Heart left ventricle (tissue), 16 donors: ENCODE measurements at regions of chr17 and their contacts with region 1.

Region 1: DNA sequence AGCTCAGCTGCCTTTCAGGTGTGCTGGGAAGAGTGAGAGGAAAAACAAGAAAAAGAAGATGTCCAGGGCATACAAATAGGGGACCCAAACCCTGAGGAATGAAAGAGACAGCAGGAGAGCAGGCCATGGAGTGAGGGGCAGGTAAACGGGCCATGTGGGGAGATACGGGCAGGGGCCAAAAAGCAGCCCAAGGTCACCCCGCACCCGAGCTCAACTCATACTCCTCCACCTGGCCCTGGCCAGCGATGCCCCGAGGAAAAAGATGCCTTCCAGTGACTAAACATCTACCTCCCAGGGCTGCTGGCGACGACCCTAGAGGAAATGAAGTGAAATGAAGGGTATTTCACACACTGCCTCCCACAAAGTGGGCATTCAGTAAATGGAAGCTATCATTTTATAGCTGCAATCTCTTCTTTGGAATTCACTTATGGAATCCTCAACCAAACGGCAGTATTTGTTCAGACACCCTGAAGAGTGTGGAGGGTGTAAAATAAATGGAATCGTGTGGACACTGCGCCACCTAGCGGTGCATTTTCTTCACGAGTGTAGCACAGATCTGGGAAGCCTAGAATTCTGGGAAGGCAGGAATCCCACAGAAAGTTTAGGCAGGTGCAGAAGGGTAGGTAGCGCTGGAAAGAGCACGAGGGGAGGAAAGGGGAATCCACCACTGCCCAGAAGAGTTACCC is 14.9 kb downstream of the ELAC2 start:
- DNase-seq: peak; percentile 67 to 85 (median 79)
- ATAC-seq: peak; percentile 81 to 93 (median 85)
- H3K4me3 ChIP-seq: no peak overlapping the region
- H3K27ac ChIP-seq: no peak overlapping the region
- H3K4me1 ChIP-seq: peaks cover 0 to 7% (median 1%) of the 10 kb centered on the region in 12 donors
- H3K27me3 ChIP-seq: no peaks in the 10 kb centered on the region
- CTCF ChIP-seq: peak; percentile 72 to 91 (median 85)
- POLR2A ChIP-seq: no peak

Region 2: DNA sequence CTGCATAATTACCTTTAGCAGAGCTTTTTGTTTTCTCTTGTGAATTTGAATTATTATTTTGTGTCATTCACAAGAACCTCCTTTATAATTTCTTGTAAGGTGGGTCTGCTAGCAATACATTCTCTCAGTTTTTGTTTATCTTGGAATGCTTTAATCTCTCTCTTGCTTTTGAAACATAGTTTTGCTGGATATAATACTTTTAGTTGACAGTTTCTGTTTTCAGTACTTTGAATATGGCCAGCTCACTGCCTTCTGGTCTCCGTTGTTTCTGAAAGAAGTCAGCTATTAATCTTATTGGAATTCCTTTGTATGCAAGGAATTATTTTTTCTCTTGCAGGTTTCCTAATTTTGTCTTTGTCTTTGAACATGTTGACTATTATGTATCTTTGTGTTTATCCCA is 815.3 kb before region 1 on chr17:
- intact Hi-C with region 1: loop called in 6 of 10 experiments (anchors 5 to 10 kb)
- DNase-seq: no peak
- ATAC-seq: no peak
- H3K4me3 ChIP-seq: no peak overlapping the region
- H3K27ac ChIP-seq: no peak overlapping the region
- H3K4me1 ChIP-seq: no peaks in the 10 kb centered on the region
- H3K27me3 ChIP-seq: no peaks in the 10 kb centered on the region
- CTCF ChIP-seq: no peak
- POLR2A ChIP-seq: no peak

Region 3: DNA sequence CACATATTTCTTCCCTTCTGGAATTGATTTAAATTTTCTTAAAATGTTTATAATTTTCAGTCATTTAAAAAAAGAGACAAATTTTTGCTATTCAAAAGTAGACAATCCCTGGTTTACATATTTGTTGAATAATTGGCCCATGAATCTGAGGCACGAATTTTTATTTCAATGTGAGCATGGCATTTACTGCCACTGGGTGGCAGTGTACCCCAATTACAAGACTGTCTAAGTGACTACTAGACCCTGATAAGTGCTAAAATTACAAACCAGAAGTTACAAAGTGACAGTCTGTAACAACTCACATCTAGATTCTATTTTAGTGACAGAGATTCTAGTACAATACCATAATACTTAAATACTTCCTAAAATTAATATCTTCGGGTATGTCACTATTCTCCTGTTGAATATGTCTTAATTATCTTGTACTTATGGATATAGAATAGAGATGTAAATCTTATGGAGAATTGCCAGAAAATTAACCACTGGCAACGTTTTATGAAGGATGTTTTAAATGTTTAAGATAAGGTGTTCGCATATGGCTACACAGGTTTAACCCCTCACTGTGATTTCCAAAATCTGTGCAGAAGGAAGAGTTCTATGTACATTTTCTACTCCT is 746.4 kb before region 1 on chr17:
- intact Hi-C with region 1: loop called in 9 of 10 experiments (anchors 2 to 10 kb)
- DNase-seq: peak in 3 of 5 donors; percentile 26 to 43 (median 29)
- ATAC-seq: peak; percentile 54 to 79 (median 72)
- H3K4me3 ChIP-seq: no peak overlapping the region
- H3K27ac ChIP-seq: peak overlapping the region in 1 of 12 donors; percentile 2
- H3K4me1 ChIP-seq: peaks cover 0 to 21% (median 0%) of the 10 kb centered on the region in 12 donors
- H3K27me3 ChIP-seq: no peaks in the 10 kb centered on the region
- CTCF ChIP-seq: peak; percentile 65 to 81 (median 75)
- POLR2A ChIP-seq: no peak

Region 4: GRCh38 chr17:12667299-12667958 is 335.5 kb before region 1 on chr17:
- intact Hi-C with region 1: loop called in 1 of 10 experiments (anchors 10 kb)
- DNase-seq: peak in 4 of 5 donors; percentile 34 to 56 (median 48)
- ATAC-seq: peak; percentile 62 to 81 (median 72)
- H3K4me3 ChIP-seq: peak overlapping the region; percentile 47 to 81 (median 64)
- H3K27ac ChIP-seq: peak overlapping the region; percentile 51 to 91 (median 80)
- H3K4me1 ChIP-seq: peaks cover 0 to 33% (median 5%) of the 10 kb centered on the region in 12 donors
- H3K27me3 ChIP-seq: peaks cover 0 to 37% (median 5%) of the 10 kb centered on the region in 9 donors
- CTCF ChIP-seq: peak in 11 of 12 donors; percentile 7 to 64 (median 45)
- POLR2A ChIP-seq: peak in 1 of 2 donors; percentile 7

Region 5: DNA sequence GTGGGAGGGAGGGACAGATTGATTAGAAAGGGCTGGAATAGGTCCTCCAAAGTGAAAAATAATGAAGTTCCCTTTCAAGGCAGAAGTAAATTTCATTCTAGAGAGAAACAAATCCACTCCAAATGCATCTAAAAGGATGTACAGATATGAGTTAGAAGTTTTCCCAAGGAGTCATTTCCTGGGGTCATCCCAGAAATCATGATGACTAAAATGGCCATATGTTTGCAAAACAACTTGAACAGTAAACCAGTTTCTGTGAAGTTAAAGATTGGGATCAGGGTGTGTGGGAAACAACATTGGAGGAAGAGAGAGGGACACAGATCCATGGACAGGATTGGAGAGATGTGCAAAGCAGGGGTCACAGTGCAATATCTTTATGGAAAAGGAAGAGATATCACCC is 246.1 kb before region 1 on chr17:
- intact Hi-C with region 1: loop called in 1 of 10 experiments (anchors 10 kb)
- DNase-seq: no peak
- ATAC-seq: no peak
- H3K4me3 ChIP-seq: no peak overlapping the region
- H3K27ac ChIP-seq: no peak overlapping the region
- H3K4me1 ChIP-seq: peaks cover 0 to 7% (median 0%) of the 10 kb centered on the region in 12 donors
- H3K27me3 ChIP-seq: no peaks in the 10 kb centered on the region
- CTCF ChIP-seq: no peak
- POLR2A ChIP-seq: no peak

Region 6: GRCh38 chr17:12940699-12941098 is 62.2 kb before region 1 on chr17:
- intact Hi-C with region 1: loop called in 1 of 10 experiments (anchors 10 kb)
- DNase-seq: no peak
- ATAC-seq: no peak
- H3K4me3 ChIP-seq: no peak overlapping the region
- H3K27ac ChIP-seq: no peak overlapping the region
- H3K4me1 ChIP-seq: no peaks in the 10 kb centered on the region
- H3K27me3 ChIP-seq: no peaks in the 10 kb centered on the region
- CTCF ChIP-seq: no peak
- POLR2A ChIP-seq: no peak

Region 7: GRCh38 chr17:13051915-13052314 is 49.0 kb after region 1 on chr17:
- intact Hi-C with region 1: no loop called
- DNase-seq: no peak
- ATAC-seq: no peak
- H3K4me3 ChIP-seq: no peak overlapping the region
- H3K27ac ChIP-seq: no peak overlapping the region
- H3K4me1 ChIP-seq: no peaks in the 10 kb centered on the region
- H3K27me3 ChIP-seq: peaks cover 0 to 3% (median 0%) of the 10 kb centered on the region in 9 donors
- CTCF ChIP-seq: no peak
- POLR2A ChIP-seq: no peak

Region 8: DNA sequence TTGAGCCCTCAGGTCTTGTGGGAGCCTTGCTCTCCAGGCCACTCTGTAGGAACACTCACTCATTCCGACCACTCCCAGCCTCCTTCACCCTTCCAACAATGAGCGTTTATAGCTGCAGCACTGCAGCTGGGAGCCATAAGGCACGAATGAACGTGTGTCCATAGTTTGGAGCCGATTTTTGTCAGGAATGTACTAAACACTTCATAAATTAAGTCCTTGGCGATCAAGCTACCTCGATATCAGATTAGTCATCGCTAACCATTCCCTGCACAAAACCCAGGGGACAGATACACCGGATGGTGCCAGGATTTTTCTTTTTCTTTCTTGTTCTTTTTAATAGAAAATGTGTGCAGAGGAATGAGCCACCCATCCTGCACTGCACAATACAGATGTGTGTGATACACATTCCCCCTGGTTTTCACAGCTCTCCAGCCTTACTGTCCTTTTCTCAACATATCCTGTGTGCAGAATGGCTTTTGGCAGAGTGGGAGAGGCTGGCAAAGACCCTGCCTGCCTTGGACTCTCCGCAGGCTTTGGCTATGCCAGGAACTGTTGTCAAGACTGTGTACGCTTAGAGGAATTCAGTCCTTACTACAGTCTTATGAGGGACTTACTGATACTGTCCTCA is 83.3 kb after region 1 on chr17:
- intact Hi-C with region 1: no loop called
- DNase-seq: peak in 3 of 5 donors; percentile 20 to 32 (median 26)
- ATAC-seq: peak; percentile 24 to 85 (median 56)
- H3K4me3 ChIP-seq: no peak overlapping the region
- H3K27ac ChIP-seq: no peak overlapping the region
- H3K4me1 ChIP-seq: peaks cover 0 to 4% (median 0%) of the 10 kb centered on the region in 12 donors
- H3K27me3 ChIP-seq: peaks cover 0 to 8% (median 0%) of the 10 kb centered on the region in 9 donors
- CTCF ChIP-seq: no peak
- POLR2A ChIP-seq: no peak

Region 9: DNA sequence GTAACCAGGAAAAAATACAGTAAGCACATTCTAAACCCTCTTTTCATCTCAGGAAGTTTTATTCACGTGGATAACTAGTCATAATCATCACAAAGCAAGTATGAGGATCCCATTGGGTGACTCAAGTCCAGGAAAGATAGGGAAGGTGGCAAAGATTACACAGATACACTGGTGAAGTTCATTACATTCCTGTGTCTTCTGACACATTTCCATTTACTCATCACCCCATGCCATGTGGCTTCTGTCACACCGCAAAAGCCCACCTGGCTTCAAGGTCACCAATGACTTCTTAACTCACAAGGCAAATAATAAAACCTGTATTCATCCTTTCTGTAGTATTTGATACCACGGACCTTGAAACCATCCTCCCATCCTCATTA is 581.8 kb after region 1 on chr17:
- intact Hi-C with region 1: no loop called
- DNase-seq: no peak
- ATAC-seq: no peak
- H3K4me3 ChIP-seq: no peak overlapping the region
- H3K27ac ChIP-seq: no peak overlapping the region
- H3K4me1 ChIP-seq: peaks cover 0 to 7% (median 0%) of the 10 kb centered on the region in 12 donors
- H3K27me3 ChIP-seq: no peaks in the 10 kb centered on the region
- CTCF ChIP-seq: no peak
- POLR2A ChIP-seq: no peak